ENCODE measurements at regions of chr21 and their contacts with region 1.

Region 1: GRCh38 chr21:25561668-25562641 is 45.3 kb downstream of the MRPL39 start:
- DNase-seq: peak; percentile 66
- ATAC-seq: peak; percentile 57
- H3K4me3 ChIP-seq: peak overlapping the region; percentile 87
- H3K27ac ChIP-seq: peak overlapping the region; percentile 92
- H3K4me1 ChIP-seq: peaks cover 10% of the 10 kb centered on the region
- H3K27me3 ChIP-seq: no peaks in the 10 kb centered on the region
- CTCF ChIP-seq: peak in 1 of 3 experiments; percentile 10; a peak in 2 of 6 replicates
- EP300 ChIP-seq: 0 out of 4 replicates have a peak, but pooled peaks have one; percentile 6 to 10
- POLR2A ChIP-seq: peak; percentile 96
- RAD21 ChIP-seq: peak; percentile 49

Region 2: GRCh38 chr21:24895885-24896734 is 665.8 kb before region 1 on chr21:
- CTCF ChIA-PET with region 1: no interaction called
- POLR2A ChIA-PET with region 1: no interaction called
- RAD21 ChIA-PET with region 1: no interaction called
- SMC1A ChIA-PET with region 1: interaction called, 3 read pairs
- in situ Hi-C with region 1: no loop called
- intact Hi-C with region 1: loop called (anchors 5 kb)
- DNase-seq: peak; percentile 49
- ATAC-seq: peak; percentile 87
- H3K4me3 ChIP-seq: no peak overlapping the region
- H3K27ac ChIP-seq: no peak overlapping the region
- H3K4me1 ChIP-seq: no peaks in the 10 kb centered on the region
- H3K27me3 ChIP-seq: no peaks in the 10 kb centered on the region
- CTCF ChIP-seq: peak; percentile 48 to 62 (median 50)
- EP300 ChIP-seq: no peak
- POLR2A ChIP-seq: no peak
- RAD21 ChIP-seq: peak; percentile 91

Region 3: GRCh38 chr21:25412100-25412499 is 149.9 kb before region 1 on chr21:
- CTCF ChIA-PET with region 1: interaction called, 163 read pairs
- POLR2A ChIA-PET with region 1: interaction called, 4 read pairs
- RAD21 ChIA-PET with region 1: interaction called, 253 read pairs
- SMC1A ChIA-PET with region 1: interaction called, 426 read pairs
- in situ Hi-C with region 1: loop called (anchors 5 kb)
- intact Hi-C with region 1: no loop called
- DNase-seq: no peak
- ATAC-seq: peak; percentile 28; the same call in 2 of the 3 replicates
- H3K4me3 ChIP-seq: no peak overlapping the region
- H3K27ac ChIP-seq: no peak overlapping the region; the same call in 1 of the 2 replicates
- H3K4me1 ChIP-seq: peaks cover 12% of the 10 kb centered on the region
- H3K27me3 ChIP-seq: no peaks in the 10 kb centered on the region
- CTCF ChIP-seq: no peak
- EP300 ChIP-seq: no peak
- POLR2A ChIP-seq: no peak
- RAD21 ChIP-seq: no peak

Region 4: GRCh38 chr21:25464275-25464674 is 97.7 kb before region 1 on chr21:
- CTCF ChIA-PET with region 1: interaction called, 8 read pairs
- POLR2A ChIA-PET with region 1: interaction called, 4 read pairs
- RAD21 ChIA-PET with region 1: interaction called, 3 read pairs
- SMC1A ChIA-PET with region 1: interaction called, 12 read pairs
- in situ Hi-C with region 1: no loop called
- intact Hi-C with region 1: loop called (anchors 2 kb)
- DNase-seq: no peak
- ATAC-seq: peak; percentile 76
- H3K4me3 ChIP-seq: peak overlapping the region; percentile 22; the same call in 1 of the 2 replicates
- H3K27ac ChIP-seq: peak overlapping the region; percentile 87
- H3K4me1 ChIP-seq: peaks cover 41% of the 10 kb centered on the region
- H3K27me3 ChIP-seq: no peaks in the 10 kb centered on the region
- CTCF ChIP-seq: no peak
- EP300 ChIP-seq: peak; percentile 69 to 94; a peak in 3 of 4 replicates
- POLR2A ChIP-seq: no peak
- RAD21 ChIP-seq: no peak

Region 5: GRCh38 chr21:25501996-25502665 is 59.8 kb before region 1 on chr21:
- CTCF ChIA-PET with region 1: interaction called, 3 read pairs
- POLR2A ChIA-PET with region 1: interaction called, 5 read pairs
- RAD21 ChIA-PET with region 1: interaction called, 3 read pairs
- SMC1A ChIA-PET with region 1: interaction called, 13 read pairs
- in situ Hi-C with region 1: loop called (anchors 10 kb)
- intact Hi-C with region 1: loop called (anchors 2 kb)
- DNase-seq: peak; percentile 87
- ATAC-seq: peak; percentile 78
- H3K4me3 ChIP-seq: no peak overlapping the region
- H3K27ac ChIP-seq: peak overlapping the region; percentile 83
- H3K4me1 ChIP-seq: peaks cover 31% of the 10 kb centered on the region
- H3K27me3 ChIP-seq: no peaks in the 10 kb centered on the region
- CTCF ChIP-seq: no peak
- EP300 ChIP-seq: peak; percentile 8 to 26; a peak in 2 of 4 replicates
- POLR2A ChIP-seq: no peak
- RAD21 ChIP-seq: peak; percentile 17; the same call in 1 of the 2 replicates

Region 6: GRCh38 chr21:25515484-25516405 is 46.2 kb before region 1 on chr21:
- CTCF ChIA-PET with region 1: interaction called, 4 read pairs
- POLR2A ChIA-PET with region 1: interaction called, 18 read pairs
- RAD21 ChIA-PET with region 1: interaction called, 12 read pairs
- SMC1A ChIA-PET with region 1: interaction called, 9 read pairs
- in situ Hi-C with region 1: no loop called
- intact Hi-C with region 1: loop called (anchors 1 kb)
- DNase-seq: no peak
- ATAC-seq: no peak
- H3K4me3 ChIP-seq: no peak overlapping the region
- H3K27ac ChIP-seq: no peak overlapping the region
- H3K4me1 ChIP-seq: peaks cover 8% of the 10 kb centered on the region; the same call in 1 of the 2 replicates
- H3K27me3 ChIP-seq: no peaks in the 10 kb centered on the region
- CTCF ChIP-seq: no peak
- EP300 ChIP-seq: no peak
- POLR2A ChIP-seq: no peak
- RAD21 ChIP-seq: no peak

Region 7: GRCh38 chr21:25626757-25627156 is 64.8 kb after region 1 on chr21:
- CTCF ChIA-PET with region 1: no interaction called
- POLR2A ChIA-PET with region 1: no interaction called
- RAD21 ChIA-PET with region 1: no interaction called
- SMC1A ChIA-PET with region 1: no interaction called
- in situ Hi-C with region 1: no loop called
- intact Hi-C with region 1: no loop called
- DNase-seq: no peak
- ATAC-seq: no peak
- H3K4me3 ChIP-seq: no peak overlapping the region
- H3K27ac ChIP-seq: no peak overlapping the region
- H3K4me1 ChIP-seq: no peaks in the 10 kb centered on the region
- H3K27me3 ChIP-seq: no peaks in the 10 kb centered on the region; a peak in 1 of 4 replicates
- CTCF ChIP-seq: no peak
- EP300 ChIP-seq: no peak
- POLR2A ChIP-seq: no peak
- RAD21 ChIP-seq: no peak

Measured in GM12878 (cell line).